ENCODE measurements at regions of chr1 and their contacts with region 1.

Region 1: GRCh38 chr1:86704458-86704971 is at the start of gene SH3GLB1:
- DNase-seq: peak; percentile 84 to 89
- H3K4me3 ChIP-seq: peak within 1 kb of the TSS; percentile 76
- H3K27ac ChIP-seq: peak within 1 kb of the TSS; percentile 77
- H3K4me1 ChIP-seq: peaks cover 30% of the 10 kb centered on the region
- H3K27me3 ChIP-seq: no peaks in the 10 kb centered on the region
- CTCF ChIP-seq: peak; percentile 97
- total RNA-seq, gene SH3GLB1: 38.3 and 47.6 TPM in 2 replicates

Region 2: DNA sequence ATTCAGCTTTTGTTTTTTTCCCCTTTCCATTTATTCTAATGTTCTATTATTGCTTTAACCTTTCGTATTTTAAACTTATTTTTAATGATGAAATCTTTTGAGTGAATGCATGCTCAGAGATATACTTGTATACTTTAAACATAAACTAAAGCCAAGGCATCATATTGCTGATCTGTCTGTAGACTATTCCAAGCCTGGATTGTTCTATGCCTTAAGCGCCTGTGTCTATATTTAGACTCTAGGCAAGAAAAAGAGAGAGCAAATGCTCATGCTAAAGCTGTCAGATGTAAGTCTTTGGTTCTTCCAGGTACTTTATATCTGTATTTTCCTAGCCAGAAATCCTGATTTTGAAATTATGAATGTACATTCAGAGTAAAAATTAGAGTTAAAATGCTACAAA is 14.3 kb after region 1 on chr1:
- CTCF ChIA-PET with region 1: interaction called, 10 read pairs
- POLR2A ChIA-PET with region 1: no interaction called
- intact Hi-C with region 1: no loop called
- DNase-seq: no peak
- H3K4me3 ChIP-seq: no peak overlapping the region
- H3K27ac ChIP-seq: no peak overlapping the region
- H3K4me1 ChIP-seq: no peaks in the 10 kb centered on the region
- H3K27me3 ChIP-seq: no peaks in the 10 kb centered on the region
- CTCF ChIP-seq: no peak